ENCODE measurements at regions of chr3 and their contacts with region 1.

Region 1: DNA sequence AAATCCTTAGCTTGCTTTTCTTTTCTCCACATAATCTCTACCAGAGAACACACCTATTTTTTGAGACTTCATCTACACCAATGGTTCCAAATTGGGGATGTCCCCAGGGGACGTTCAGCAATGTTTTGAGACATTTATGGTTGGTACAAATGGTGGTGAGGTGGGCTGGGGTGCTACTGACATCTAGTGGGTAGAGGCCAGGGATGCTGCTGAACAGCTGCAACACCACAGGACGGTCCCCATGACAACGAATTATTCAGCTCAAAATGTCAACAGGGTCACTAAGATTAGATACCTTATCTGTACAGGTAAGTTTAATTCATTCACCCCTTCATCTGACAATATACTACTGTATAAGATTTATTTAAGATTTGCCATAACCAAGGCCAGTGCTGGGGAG is 14.3 kb downstream of the GK5 start:
- DNase-seq: no peak
- H3K4me3 ChIP-seq: no peak overlapping the region
- H3K27ac ChIP-seq: peak overlapping the region; percentile 71 to 72
- H3K4me1 ChIP-seq: peaks cover 0 to 45% of the 10 kb centered on the region in 2 donors
- H3K27me3 ChIP-seq: no peaks in the 10 kb centered on the region
- CTCF ChIP-seq: no peak

Region 2: DNA sequence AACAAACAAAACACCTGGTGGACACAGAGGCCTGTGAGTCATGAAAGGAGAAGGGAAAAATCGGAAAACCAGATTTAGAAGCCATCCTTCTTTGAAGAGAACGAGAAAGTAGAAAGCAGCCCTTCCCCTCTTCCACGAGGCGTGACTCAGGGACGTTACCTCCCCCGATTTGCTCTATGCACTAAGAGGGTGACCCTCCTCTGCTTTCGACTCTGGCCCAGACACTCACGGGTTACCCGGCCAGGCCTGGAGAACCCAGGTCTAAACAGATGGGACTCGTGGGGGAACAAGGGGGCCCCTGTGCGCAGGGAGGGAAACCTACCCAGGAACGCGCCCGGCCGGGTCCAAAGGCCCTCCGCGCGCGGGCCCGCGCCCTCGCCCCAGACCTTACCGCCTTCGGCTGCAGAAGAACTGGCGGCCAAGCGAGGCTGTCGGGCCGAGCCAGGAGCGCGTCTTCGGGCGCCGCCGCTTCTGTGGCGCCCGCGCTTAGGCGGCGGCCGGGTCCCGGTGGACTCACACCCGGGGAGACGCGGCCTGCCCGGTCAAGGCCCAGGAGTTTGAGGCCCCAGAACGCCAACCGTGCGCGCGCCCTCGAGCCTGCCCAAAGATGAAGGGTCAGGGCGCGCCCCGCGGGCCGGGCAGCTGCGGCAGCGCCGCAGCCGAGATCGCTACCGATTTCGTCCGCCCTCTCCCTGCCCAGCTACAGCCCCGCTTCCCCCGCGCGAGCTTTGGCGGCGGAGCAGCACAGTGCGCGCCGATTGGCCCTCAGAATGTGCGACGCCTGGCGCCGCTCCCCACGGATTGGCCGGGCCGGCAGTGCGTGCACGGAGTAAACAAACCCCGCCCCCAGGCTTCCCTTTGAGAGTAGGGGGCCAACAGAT is 62.0 kb before region 1 on chr3 and contains the start of gene TFDP2:
- intact Hi-C with region 1: loop called (anchors 5 kb)
- DNase-seq: peak; percentile 52 to 94
- H3K4me3 ChIP-seq: peak within 1 kb of the TSS; percentile 76 to 90
- H3K27ac ChIP-seq: peak within 1 kb of the TSS; percentile 86 to 94
- H3K4me1 ChIP-seq: peaks cover 0 to 10% of the 10 kb centered on the region in 2 donors
- H3K27me3 ChIP-seq: no peaks in the 10 kb centered on the region
- CTCF ChIP-seq: no peak
- total RNA-seq, gene TFDP2: 23.0 TPM

Region 3: GRCh38 chr3:142224482-142225072 is 13.5 kb after region 1 on chr3:
- intact Hi-C with region 1: loop called (anchors 2 kb)
- DNase-seq: no peak
- H3K4me3 ChIP-seq: peak overlapping the region; percentile 83 to 97
- H3K27ac ChIP-seq: peak overlapping the region; percentile 90 to 96
- H3K4me1 ChIP-seq: peaks cover 3 to 18% of the 10 kb centered on the region in 2 donors
- H3K27me3 ChIP-seq: no peaks in the 10 kb centered on the region
- CTCF ChIP-seq: no peak

Measured in ascending aorta (tissue), 2 donors.